ENCODE measurements at regions of chr6 and their contacts with region 1.

Region 1: DNA sequence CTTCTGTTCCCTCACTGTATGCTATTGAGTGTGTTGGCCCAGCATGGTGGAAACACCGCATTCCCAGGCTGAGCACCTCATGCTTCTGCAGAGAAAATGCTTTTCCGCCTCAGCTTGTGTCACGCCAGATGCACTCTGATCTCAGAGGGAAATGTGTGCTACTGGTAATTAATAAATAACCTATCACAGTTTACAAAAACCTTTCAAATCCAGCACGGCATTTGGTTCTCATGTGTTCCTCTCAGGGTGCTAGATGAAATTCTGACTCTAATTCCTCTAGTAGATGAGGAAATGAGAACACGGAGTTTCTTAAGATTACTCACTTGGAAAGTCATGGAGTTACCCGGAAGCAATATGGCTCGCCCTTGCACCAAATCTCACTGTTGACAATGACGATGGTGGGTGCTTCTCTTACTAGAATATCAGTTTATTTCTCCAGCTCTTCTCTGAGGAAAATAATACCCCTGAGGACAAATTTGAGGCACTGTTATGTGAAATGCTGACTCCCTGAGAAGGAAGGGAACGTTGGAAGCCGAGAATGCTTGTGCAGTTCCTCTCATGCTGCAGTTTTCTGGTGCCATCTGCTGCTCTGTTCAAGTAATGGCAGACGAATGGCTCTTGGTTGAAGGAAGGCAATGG is 116.6 kb downstream of the RNF144B start:
- DNase-seq: no peak
- ATAC-seq: peak; percentile 87 to 92
- H3K4me3 ChIP-seq: peak overlapping the region; percentile 47
- H3K27ac ChIP-seq: peak overlapping the region; percentile 66
- H3K4me1 ChIP-seq: peaks cover 19% of the 10 kb centered on the region
- H3K27me3 ChIP-seq: no peaks in the 10 kb centered on the region
- CTCF ChIP-seq: peak; percentile 90

Region 2: DNA sequence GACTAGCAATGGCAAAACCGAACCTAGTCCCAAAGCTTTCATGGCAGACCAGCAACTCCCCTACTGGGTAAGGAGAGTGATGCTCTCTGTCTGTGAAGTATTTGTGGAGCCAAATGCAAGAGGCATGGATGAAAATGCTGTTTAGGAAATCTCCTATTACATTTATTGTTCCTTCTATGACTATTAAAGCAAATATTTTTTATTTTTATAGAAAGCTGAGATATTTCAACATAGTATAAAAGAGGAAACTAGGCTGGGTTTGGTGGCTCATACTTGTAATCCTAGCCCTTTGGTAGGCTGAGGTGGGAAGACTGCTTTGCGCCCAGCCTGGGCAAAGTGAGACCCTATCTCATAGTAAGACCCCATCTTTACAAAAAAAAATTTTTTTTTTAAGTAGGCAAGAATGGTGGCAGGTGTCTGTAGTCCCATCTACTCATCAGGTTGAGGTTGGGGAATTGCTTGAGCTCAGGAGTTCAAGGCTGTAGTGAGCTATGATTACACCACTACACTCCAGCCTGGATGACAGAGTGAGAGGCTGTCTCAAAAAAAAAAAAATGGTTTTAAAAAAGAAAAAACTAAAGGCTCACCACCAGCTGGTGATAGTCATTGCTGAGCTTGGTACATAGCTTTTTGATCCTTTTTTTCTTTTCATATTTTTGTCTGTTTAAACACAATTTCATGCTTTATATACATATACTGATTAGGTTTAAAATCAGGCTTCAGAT is 337.2 kb before region 1 on chr6:
- intact Hi-C with region 1: no loop called
- DNase-seq: peak; percentile 49
- ATAC-seq: peak; percentile 64 to 65
- H3K4me3 ChIP-seq: no peak overlapping the region
- H3K27ac ChIP-seq: no peak overlapping the region
- H3K4me1 ChIP-seq: no peaks in the 10 kb centered on the region
- H3K27me3 ChIP-seq: no peaks in the 10 kb centered on the region
- CTCF ChIP-seq: no peak

Region 3: DNA sequence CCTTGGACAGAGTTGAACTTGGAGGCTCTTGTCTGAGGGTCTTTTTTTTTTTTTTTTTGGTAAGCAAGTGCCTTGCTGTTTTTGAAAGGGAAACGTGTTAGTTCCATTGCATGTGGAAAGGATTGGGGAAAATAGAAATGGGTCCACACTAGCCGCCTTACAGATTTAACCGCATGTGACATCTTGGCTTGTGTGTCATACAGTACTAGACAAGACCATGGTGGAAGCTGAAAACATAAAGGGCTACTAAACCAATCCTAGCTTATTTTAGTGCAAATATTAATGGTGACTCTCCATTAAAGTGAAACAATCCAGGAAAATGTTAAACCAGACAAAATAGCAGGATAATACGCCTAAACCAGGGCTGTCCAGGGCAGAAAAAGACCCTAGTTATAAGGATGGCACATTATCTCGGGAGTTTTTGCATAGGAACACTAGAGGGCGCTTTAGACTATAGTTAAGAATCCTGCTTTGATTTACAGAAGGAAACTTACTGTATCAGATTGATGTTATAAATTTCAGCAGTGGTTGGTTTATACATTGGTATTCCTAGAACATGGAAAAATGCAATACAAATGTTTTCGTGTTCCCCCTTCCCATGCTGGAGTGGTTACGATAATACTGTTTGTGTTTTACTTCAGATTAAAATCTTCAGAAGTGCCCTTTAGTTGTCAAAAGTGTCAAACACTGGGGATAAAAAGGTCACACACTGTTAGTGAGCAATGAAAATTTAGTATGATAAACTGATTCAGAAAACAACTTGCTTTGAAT is 179.6 kb before region 1 on chr6:
- intact Hi-C with region 1: loop called (anchors 5 kb)
- DNase-seq: no peak
- ATAC-seq: peak; percentile 81
- H3K4me3 ChIP-seq: no peak overlapping the region
- H3K27ac ChIP-seq: no peak overlapping the region
- H3K4me1 ChIP-seq: peaks cover 15% of the 10 kb centered on the region
- H3K27me3 ChIP-seq: no peaks in the 10 kb centered on the region
- CTCF ChIP-seq: peak; percentile 73

Region 4: GRCh38 chr6:18613319-18613925 is 109.7 kb after region 1 on chr6:
- intact Hi-C with region 1: no loop called
- DNase-seq: no peak
- ATAC-seq: no peak
- H3K4me3 ChIP-seq: no peak overlapping the region
- H3K27ac ChIP-seq: no peak overlapping the region
- H3K4me1 ChIP-seq: no peaks in the 10 kb centered on the region
- H3K27me3 ChIP-seq: no peaks in the 10 kb centered on the region
- CTCF ChIP-seq: no peak

Region 5: DNA sequence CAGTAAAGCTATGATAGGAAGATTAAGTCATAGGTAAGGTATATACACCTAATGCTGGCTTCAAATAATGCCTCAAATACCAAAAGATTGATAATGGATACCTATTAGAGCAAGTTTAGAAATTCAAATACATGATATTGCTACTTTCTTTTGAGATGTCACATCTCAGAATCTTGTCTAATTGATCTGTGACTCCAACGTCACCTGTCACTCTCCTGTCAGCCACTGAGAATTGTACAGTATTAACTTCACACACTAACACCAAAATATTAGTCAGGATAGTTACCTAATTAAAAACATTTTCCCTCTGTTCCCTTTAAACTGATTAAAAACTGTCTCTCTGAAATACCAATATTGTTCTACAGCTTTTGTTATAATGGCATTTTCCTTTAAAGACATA is 757.9 kb after region 1 on chr6:
- intact Hi-C with region 1: no loop called
- DNase-seq: no peak
- ATAC-seq: no peak
- H3K4me3 ChIP-seq: no peak overlapping the region
- H3K27ac ChIP-seq: no peak overlapping the region
- H3K4me1 ChIP-seq: no peaks in the 10 kb centered on the region
- H3K27me3 ChIP-seq: no peaks in the 10 kb centered on the region
- CTCF ChIP-seq: no peak